Right ventricle myocardium superior (tissue), 1 donor: ENCODE measurements at regions of chr1 and their contacts with region 1.

Region 1: DNA sequence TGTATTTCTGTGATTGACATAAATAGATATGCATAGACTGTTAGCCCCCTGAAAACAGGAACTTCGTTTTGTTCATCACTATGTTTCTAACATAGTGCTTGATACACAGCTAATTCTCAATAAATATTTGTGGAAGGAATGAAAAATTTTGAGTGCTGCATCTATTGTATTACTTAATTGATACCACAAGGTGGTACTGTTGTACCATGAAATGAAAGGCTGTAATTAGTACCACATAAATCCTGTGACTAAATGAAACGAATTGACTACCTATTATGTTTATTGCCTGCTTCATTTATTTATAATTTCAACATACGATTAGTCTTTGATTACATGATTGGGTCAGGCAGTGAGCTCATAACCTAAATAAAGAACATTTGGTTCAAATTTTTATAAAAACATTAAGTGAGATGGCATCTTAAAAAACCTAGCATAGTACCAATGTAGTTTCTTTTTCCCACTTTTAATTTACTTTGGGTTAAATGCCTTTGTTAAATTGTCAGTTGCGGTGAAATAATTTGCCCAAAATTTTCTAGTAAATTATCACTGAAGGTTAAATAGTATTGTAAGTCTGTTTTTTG is 15.0 kb upstream of the TGFB2 start:
- DNase-seq: no peak
- ATAC-seq: peak; percentile 67

Region 2: GRCh38 chr1:219566951-219567947 is 1237.1 kb after region 1 on chr1:
- intact Hi-C with region 1: loop called (anchors 10 kb)
- DNase-seq: no peak
- ATAC-seq: peak; percentile 86

Region 3: DNA sequence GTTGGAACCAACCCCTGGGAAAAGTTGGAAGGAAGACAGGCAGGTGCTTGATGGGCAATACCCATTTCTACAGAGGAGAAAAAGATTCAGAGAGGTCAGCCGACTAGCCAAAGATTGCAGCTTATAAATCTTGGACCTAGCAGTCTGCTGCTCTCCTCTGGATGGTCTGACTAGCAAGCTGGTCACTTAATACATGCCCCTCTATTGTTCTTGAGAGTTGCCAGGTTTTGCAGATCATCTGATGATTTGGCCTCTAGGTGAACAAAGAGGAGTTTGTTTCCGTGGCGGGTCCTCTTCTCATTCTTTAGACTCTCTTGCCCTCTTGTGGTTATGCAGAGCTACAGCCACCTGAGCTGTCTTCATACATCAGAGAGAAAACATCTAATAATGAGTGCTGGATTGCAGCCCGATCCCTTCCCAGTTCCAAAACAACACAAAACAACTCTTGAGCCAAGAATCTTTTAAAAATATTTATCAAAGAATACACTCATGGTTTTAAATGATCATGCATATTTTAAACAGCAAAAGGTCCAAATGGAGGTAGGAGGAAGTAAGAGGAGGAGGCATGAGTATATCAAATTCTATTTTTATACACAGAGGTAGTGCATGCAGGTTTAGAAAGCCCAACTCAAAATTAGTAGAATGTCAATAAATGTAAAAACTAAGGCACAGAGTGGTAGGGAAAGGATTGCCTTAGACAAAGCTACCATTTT is 1482.5 kb after region 1 on chr1:
- intact Hi-C with region 1: loop called (anchors 10 kb)
- DNase-seq: no peak
- ATAC-seq: peak; percentile 94